ENCODE measurements at regions of chr6 and their contacts with region 1.

Region 1: GRCh38 chr6:127456465-127456864 is 2.7 kb downstream of the KIAA0408 start:
- DNase-seq: no peak
- ATAC-seq: no peak
- H3K4me3 ChIP-seq: no peak overlapping the region
- H3K27ac ChIP-seq: no peak overlapping the region
- H3K4me1 ChIP-seq: no peaks in the 10 kb centered on the region
- H3K27me3 ChIP-seq: no peaks in the 10 kb centered on the region
- CTCF ChIP-seq: no peak

Region 2: GRCh38 chr6:127000631-127001030 is 455.8 kb before region 1 on chr6:
- CTCF ChIA-PET with region 1: no interaction called
- POLR2A ChIA-PET with region 1: no interaction called
- in situ Hi-C with region 1: no loop called
- intact Hi-C with region 1: no loop called
- DNase-seq: no peak
- ATAC-seq: no peak
- H3K4me3 ChIP-seq: no peak overlapping the region
- H3K27ac ChIP-seq: no peak overlapping the region
- H3K4me1 ChIP-seq: no peaks in the 10 kb centered on the region
- H3K27me3 ChIP-seq: no peaks in the 10 kb centered on the region
- CTCF ChIP-seq: no peak

Region 3: DNA sequence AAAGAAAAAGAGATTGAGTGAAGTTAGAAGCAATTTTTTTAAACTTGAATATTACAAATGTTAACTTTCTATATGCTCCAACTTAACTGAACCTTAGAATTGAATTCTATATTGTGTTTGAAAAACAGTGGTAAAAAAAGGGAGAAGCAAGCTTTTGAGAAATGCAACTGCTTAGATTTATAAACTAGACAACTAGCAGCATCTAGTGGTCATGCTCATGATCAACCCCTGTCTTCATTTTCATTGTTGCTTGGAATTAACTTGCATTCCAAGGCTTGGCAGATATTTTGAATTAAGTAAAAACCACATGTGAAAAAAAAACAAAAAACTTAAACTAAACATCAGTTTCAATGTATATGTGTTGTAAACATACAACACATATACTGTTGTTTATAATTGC is 233.6 kb after region 1 on chr6:
- CTCF ChIA-PET with region 1: no interaction called
- POLR2A ChIA-PET with region 1: no interaction called
- in situ Hi-C with region 1: no loop called
- intact Hi-C with region 1: no loop called
- DNase-seq: no peak
- ATAC-seq: no peak
- H3K4me3 ChIP-seq: no peak overlapping the region
- H3K27ac ChIP-seq: no peak overlapping the region
- H3K4me1 ChIP-seq: no peaks in the 10 kb centered on the region
- H3K27me3 ChIP-seq: no peaks in the 10 kb centered on the region
- CTCF ChIP-seq: peak; percentile 74; the same call in 1 of the 2 replicates

Region 4: GRCh38 chr6:128713461-128713860 is 1257.0 kb after region 1 on chr6:
- CTCF ChIA-PET with region 1: no interaction called
- POLR2A ChIA-PET with region 1: interaction called, 22 read pairs
- in situ Hi-C with region 1: no loop called
- intact Hi-C with region 1: no loop called
- DNase-seq: no peak
- ATAC-seq: no peak
- H3K4me3 ChIP-seq: no peak overlapping the region
- H3K27ac ChIP-seq: no peak overlapping the region
- H3K4me1 ChIP-seq: no peaks in the 10 kb centered on the region
- H3K27me3 ChIP-seq: no peaks in the 10 kb centered on the region
- CTCF ChIP-seq: no peak